ENCODE measurements at regions of chr10 and their contacts with region 1.

Region 1: DNA sequence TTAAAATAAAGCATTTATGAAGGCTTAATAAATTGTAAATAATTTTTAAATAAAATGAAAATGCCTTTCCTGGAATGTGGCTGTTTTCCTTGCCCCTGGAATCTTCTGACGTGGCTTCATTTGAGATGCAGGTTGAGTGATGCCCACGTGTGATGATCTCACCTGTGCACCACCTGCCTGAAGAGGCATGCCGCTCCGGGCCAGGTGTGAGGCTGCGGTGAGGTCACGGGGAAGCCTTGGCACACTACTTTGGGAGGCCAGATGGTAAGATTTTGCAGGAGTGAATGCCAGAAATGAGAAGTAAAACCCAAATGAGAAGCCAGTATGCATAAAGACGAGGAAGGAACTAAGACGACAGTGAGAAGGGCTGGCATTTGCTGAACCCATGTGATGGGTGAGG is 36.2 kb downstream of the GOT1 start:
- DNase-seq: no peak
- ATAC-seq: no peak
- H3K4me3 Mint-ChIP-seq: peak overlapping the region; percentile 37
- H3K27ac Mint-ChIP-seq: no peak overlapping the region
- H3K4me1 Mint-ChIP-seq: peaks cover 46% of the 10 kb centered on the region
- H3K27me3 Mint-ChIP-seq: no peaks in the 10 kb centered on the region
- CTCF ChIP-seq: no peak

Region 2: DNA sequence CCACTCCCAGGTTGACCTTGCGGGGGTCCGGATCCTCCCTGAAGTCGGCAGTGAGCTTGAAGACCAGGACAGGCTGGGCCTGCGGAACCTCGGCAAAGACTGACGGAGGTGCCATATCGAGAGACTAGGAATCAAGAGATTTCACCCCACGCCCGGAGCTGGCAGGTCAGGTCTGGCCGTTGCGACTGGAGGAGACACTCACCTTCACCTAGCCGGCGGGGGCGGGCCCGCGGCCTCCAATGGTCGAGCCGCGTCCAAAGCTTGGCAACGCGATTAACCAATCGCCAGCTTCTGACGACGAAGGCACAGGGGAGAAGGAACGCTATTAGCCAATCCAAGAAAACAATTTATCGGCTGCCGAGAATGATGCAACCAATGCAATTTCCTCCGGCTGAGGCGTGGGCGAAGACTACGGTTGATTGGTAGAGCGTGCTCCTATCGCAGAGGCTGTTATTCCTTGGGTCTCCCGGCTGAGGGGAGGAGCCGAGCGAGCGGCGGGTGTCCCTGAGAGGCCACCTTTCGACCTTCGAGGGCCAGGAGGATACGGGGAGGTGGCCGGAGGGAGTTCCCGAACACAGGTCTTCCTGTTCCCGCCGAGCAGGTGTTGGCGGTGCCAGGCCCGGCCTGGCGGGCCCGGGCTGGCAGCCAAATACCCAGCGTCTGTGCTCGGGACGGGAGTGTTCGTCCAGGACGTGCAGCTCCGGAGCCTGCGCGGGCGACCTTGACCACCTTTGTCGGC is 36.4 kb after region 1 on chr10 and contains the start of gene GOT1:
- CTCF ChIA-PET with region 1: interaction called, 15 read pairs
- POLR2A ChIA-PET with region 1: interaction called, 5 read pairs
- DNase-seq: peak; percentile 95
- ATAC-seq: peak; percentile 93
- H3K4me3 Mint-ChIP-seq: peak within 1 kb of the TSS; percentile 99
- H3K27ac Mint-ChIP-seq: peak within 1 kb of the TSS; percentile 99
- H3K4me1 Mint-ChIP-seq: peaks cover 14% of the 10 kb centered on the region
- H3K27me3 Mint-ChIP-seq: no peaks in the 10 kb centered on the region
- CTCF ChIP-seq: no peak
- total RNA-seq, gene GOT1: 52.9 to 56.8 TPM (median 54.8 TPM) in 3 replicates

Measured in WTC11 (cell line).